CD8-positive, alpha-beta memory T cell (primary cell): ENCODE measurements at regions of chr1 and their contacts with region 1.

Region 1: GRCh38 chr1:16206547-16207317 is 5.7 kb downstream of the ARHGEF19 start:
- DNase-seq: peak; percentile 89 to 95 (median 93)
- H3K4me3 ChIP-seq: peak overlapping the region; percentile 77
- H3K4me3 Mint-ChIP-seq: peak overlapping the region; percentile 89 to 96 (median 93)
- H3K27ac ChIP-seq: peak overlapping the region; percentile 85
- H3K27ac Mint-ChIP-seq: peak overlapping the region; percentile 93 to 99 (median 96)
- H3K4me1 ChIP-seq: peaks cover 16% of the 10 kb centered on the region
- H3K4me1 Mint-ChIP-seq: peaks cover 15 to 17% (median 16%) of the 10 kb centered on the region in 3 donors
- H3K27me3 ChIP-seq: no peaks in the 10 kb centered on the region
- H3K27me3 Mint-ChIP-seq: peaks cover 0 to 2% of the 10 kb centered on the region in 2 donors

Region 2: DNA sequence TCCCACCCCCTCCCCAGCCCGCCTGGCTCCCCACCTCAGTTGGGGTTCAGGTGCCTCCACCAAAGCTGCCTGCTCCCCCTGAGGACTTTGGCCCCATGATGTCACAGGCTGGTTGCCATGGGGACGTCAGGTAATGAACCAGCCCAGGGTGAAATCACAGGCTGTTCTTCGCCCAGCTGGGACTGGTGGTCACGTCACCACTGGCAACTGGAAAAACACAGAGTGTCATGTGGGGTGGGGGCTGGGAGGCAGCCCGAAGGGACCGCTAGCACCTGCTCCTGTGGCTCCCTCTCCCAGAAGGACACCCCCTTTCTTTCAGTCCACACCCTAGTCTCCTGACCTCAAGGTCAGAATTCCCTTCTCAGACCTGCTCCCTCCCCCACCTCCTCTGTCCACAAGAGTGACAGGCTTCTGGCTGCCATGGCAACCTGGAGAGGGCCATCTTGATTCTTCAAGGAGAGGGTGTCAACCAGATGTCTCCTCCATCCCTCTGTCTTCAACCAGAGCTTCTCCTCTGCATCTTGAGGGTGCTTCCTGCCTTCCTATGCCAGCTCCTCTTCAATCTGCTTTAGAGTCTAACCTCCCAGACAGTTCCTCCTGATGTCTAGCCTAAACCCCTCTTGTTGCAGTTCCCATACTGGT is 139.5 kb before region 1 on chr1:
- CTCF ChIA-PET with region 1: no interaction called
- POLR2A ChIA-PET with region 1: no interaction called
- DNase-seq: no peak
- H3K4me3 ChIP-seq: no peak overlapping the region
- H3K4me3 Mint-ChIP-seq: no peak overlapping the region
- H3K27ac ChIP-seq: no peak overlapping the region
- H3K27ac Mint-ChIP-seq: no peak overlapping the region
- H3K4me1 ChIP-seq: peaks cover 13% of the 10 kb centered on the region
- H3K4me1 Mint-ChIP-seq: peaks cover 32 to 37% (median 33%) of the 10 kb centered on the region in 3 donors
- H3K27me3 ChIP-seq: peaks cover 4% of the 10 kb centered on the region
- H3K27me3 Mint-ChIP-seq: peaks cover 6 to 12% of the 10 kb centered on the region in 2 donors

Region 3: GRCh38 chr1:16217061-16217785 is 10.5 kb after region 1 on chr1:
- CTCF ChIA-PET with region 1: interaction called, 7 read pairs
- POLR2A ChIA-PET with region 1: interaction called, 26 read pairs
- DNase-seq: peak; percentile 89 to 94 (median 93)
- H3K4me3 ChIP-seq: peak overlapping the region; percentile 79
- H3K4me3 Mint-ChIP-seq: peak overlapping the region; percentile 84 to 93 (median 88)
- H3K27ac ChIP-seq: peak overlapping the region; percentile 70
- H3K27ac Mint-ChIP-seq: peak overlapping the region in 7 of 8 donors; percentile 29 to 90 (median 78)
- H3K4me1 ChIP-seq: peaks cover 15% of the 10 kb centered on the region
- H3K4me1 Mint-ChIP-seq: peaks cover 21 to 33% (median 21%) of the 10 kb centered on the region in 3 donors
- H3K27me3 ChIP-seq: no peaks in the 10 kb centered on the region
- H3K27me3 Mint-ChIP-seq: peaks cover 1 to 3% of the 10 kb centered on the region in 2 donors

Region 4: GRCh38 chr1:16243936-16244649 is 37.4 kb after region 1 on chr1:
- CTCF ChIA-PET with region 1: interaction called, 12 read pairs
- POLR2A ChIA-PET with region 1: no interaction called
- DNase-seq: peak; percentile 53 to 81 (median 57)
- H3K4me3 ChIP-seq: no peak overlapping the region
- H3K4me3 Mint-ChIP-seq: peak overlapping the region in 1 of 7 donors; percentile 13
- H3K27ac ChIP-seq: no peak overlapping the region
- H3K27ac Mint-ChIP-seq: peak overlapping the region in 7 of 8 donors; percentile 7 to 92 (median 70)
- H3K4me1 ChIP-seq: peaks cover 7% of the 10 kb centered on the region
- H3K4me1 Mint-ChIP-seq: peaks cover 3 to 11% (median 11%) of the 10 kb centered on the region in 3 donors
- H3K27me3 ChIP-seq: no peaks in the 10 kb centered on the region
- H3K27me3 Mint-ChIP-seq: no peaks in the 10 kb centered on the region